ENCODE measurements at regions of chr13 and their contacts with region 1.

Region 1: DNA sequence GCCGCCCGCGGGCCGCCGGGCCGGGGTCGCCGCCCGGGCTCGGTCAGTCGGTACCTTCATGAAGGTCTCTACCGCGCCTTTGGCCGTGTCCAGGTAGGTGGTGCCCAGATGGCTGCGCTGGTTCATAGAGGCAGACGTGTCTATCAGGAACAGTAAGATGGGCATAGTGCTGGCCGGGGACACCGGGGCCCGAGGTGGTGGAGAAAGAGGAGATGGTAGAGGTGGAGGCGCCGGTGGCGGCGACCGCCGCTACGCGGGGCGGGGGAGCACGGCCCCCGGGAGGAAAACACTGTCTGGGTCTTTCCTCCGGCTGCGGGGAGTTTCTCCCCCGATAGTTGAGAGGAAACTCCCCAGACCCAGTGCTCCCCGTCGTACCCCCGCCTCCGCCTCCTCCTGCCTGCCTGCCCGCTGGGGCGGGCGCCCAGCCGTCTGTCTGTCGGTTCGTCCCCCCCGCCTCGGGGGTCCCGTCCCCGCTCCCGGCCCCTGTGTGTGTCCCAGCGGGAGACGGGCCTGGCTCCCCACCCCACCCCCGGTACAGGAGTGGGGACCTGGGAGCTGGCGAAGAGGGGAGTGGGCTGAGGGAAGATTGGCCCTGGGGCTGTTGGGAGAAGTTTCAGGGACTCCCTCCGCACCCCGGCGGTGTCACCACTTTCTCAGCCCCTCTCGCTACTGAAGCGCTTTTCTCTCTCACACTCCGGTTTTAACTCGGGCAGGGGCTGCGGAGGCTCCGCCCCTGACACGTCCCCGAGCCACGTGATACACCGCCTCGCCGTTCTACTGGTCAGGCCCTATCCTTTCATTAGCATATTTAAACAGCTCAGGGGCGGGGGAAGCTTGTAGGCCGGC is at the start of gene INTS6:
- DNase-seq: peak; percentile 100
- ATAC-seq: peak; percentile 73
- H3K4me3 ChIP-seq: peak within 1 kb of the TSS; percentile 81 to 93 (median 87)
- H3K4me3 Mint-ChIP-seq: peak within 1 kb of the TSS; percentile 95
- H3K27ac ChIP-seq: peak within 1 kb of the TSS; percentile 95 to 98
- H3K27ac Mint-ChIP-seq: peak within 1 kb of the TSS; percentile 97
- H3K4me1 ChIP-seq: peaks cover 25 to 28% of the 10 kb centered on the region in 2 donors
- H3K4me1 Mint-ChIP-seq: peaks cover 48% of the 10 kb centered on the region
- H3K27me3 ChIP-seq: no peaks in the 10 kb centered on the region
- H3K27me3 Mint-ChIP-seq: no peaks in the 10 kb centered on the region
- CTCF ChIP-seq: no peak
- total RNA-seq, gene INTS6: 74.7 TPM in 2 replicates

Region 2: DNA sequence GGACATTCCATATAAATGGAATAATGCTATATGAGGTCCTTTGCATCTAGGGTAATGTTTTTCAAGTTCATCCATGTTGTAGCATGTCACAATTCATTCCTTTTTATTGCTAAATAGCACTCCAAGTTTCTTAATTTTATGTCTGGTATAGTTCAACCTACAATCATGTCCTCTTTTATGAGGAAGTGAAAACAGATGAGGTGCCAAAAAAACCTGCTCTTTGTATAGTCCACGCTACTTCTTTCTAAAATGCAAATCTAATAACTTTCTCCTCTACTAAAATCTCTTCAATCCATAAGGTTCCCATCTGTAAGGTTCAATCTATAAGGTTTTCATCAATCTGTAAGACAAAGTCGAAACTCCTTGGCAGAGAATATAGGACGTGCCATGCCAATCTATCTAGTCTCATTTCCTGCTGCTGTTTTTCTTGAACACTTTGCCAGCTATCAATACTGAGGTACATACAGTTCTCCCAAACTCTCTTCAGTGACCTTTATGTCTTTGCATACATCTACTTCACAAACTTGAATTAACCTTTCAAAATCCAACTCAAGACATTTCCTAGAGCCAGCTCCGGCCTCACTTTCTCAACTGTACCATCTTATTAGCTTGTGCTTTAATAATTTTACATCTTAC is 33.5 kb before region 1 on chr13:
- CTCF ChIA-PET with region 1: no interaction called
- POLR2A ChIA-PET with region 1: interaction called, 6 read pairs
- intact Hi-C with region 1: loop called (anchors 2 kb)
- DNase-seq: peak; percentile 60
- ATAC-seq: peak; percentile 78
- H3K4me3 ChIP-seq: peak overlapping the region in 3 of 5 experiments; percentile 7 to 42 (median 20)
- H3K4me3 Mint-ChIP-seq: peak overlapping the region; percentile 82
- H3K27ac ChIP-seq: peak overlapping the region; percentile 2 to 53
- H3K27ac Mint-ChIP-seq: peak overlapping the region; percentile 87
- H3K4me1 ChIP-seq: peaks cover 39 to 72% of the 10 kb centered on the region in 2 donors
- H3K4me1 Mint-ChIP-seq: peaks cover 75% of the 10 kb centered on the region
- H3K27me3 ChIP-seq: no peaks in the 10 kb centered on the region
- H3K27me3 Mint-ChIP-seq: no peaks in the 10 kb centered on the region
- CTCF ChIP-seq: no peak

Region 3: DNA sequence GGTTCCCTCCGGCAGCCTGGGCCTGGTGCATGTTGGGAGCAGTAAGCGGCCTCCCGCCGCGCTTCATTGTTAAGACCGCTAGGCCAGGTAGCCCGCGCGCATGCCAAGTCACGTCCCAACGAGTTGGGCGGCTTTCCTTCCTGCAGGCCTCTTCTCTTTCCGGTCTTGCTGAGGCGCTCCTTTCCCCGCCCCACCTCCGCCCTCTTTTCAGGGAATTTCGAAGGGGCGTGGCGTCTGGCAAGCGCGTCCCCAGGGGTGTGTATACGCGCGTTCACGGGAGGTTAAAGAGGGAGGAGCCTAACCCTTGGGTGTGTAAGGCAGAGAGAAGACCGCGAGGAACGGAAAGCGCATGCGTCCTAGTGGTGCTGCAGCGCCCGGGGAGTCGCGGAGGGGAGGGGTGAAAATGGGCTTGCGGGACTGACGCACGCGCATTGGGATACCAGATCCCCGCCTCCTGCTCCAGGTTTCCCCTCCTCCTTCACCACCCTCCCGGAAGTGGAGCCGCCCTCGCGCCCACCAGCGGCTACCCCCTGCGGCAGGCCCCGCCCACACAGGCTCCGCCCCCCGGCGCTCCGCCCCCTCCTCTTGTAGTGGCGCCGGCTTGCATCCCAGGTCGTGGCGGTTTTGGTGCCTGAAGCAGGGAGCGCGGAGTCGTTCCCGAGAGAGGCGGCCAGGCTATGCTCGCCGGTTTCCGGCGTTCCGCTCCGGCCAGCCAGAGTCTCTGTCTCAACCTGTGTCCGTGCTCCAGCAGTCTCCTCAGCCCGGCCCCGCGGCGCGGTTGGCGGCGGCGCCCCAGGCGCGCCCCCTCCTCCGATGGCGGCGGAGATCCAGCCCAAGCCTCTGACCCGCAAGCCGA is 131.5 kb after region 1 on chr13 and contains the start of gene WDFY2:
- CTCF ChIA-PET with region 1: interaction called, 6 read pairs
- POLR2A ChIA-PET with region 1: interaction called, 33 read pairs
- intact Hi-C with region 1: loop called (anchors 1 kb)
- DNase-seq: peak; percentile 100
- ATAC-seq: peak; percentile 80
- H3K4me3 ChIP-seq: peak within 1 kb of the TSS; percentile 68 to 94 (median 91)
- H3K4me3 Mint-ChIP-seq: peak within 1 kb of the TSS; percentile 97
- H3K27ac ChIP-seq: peak within 1 kb of the TSS; percentile 81 to 88
- H3K27ac Mint-ChIP-seq: peak within 1 kb of the TSS; percentile 98
- H3K4me1 ChIP-seq: peaks cover 12 to 14% of the 10 kb centered on the region in 2 donors
- H3K4me1 Mint-ChIP-seq: peaks cover 35% of the 10 kb centered on the region
- H3K27me3 ChIP-seq: no peaks in the 10 kb centered on the region
- H3K27me3 Mint-ChIP-seq: no peaks in the 10 kb centered on the region
- CTCF ChIP-seq: no peak
- total RNA-seq, gene WDFY2: 46.1 and 47.7 TPM in 2 replicates

Region 4: DNA sequence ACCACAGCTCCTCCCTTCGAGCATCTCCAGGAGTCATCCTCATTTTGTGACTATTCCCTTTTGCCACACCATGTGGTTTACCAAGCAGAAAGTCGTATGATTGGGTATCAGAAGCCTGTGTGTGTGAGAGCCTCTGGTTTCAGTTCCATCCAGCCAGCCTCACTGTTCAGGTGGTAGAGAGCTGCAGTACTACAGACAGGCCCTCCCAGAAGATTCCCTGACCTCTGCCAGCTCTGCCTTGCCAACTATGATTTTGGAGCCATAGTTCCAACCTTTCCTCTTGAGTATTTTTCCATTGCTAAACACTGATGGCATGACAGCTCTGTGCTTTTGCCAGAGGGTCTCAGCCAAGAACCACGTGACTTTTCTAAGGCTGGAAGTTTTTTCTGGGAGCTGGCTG is 268.9 kb after region 1 on chr13:
- CTCF ChIA-PET with region 1: no interaction called
- POLR2A ChIA-PET with region 1: interaction called, 13 read pairs
- intact Hi-C with region 1: no loop called
- DNase-seq: no peak
- ATAC-seq: no peak
- H3K4me3 ChIP-seq: no peak overlapping the region
- H3K4me3 Mint-ChIP-seq: no peak overlapping the region
- H3K27ac ChIP-seq: peak overlapping the region in 1 of 2 donors; percentile 21
- H3K27ac Mint-ChIP-seq: no peak overlapping the region
- H3K4me1 ChIP-seq: peaks cover 0 to 3% of the 10 kb centered on the region in 2 donors
- H3K4me1 Mint-ChIP-seq: peaks cover 11% of the 10 kb centered on the region
- H3K27me3 ChIP-seq: no peaks in the 10 kb centered on the region
- H3K27me3 Mint-ChIP-seq: no peaks in the 10 kb centered on the region
- CTCF ChIP-seq: no peak

Region 5: GRCh38 chr13:51803422-51804294 is 351.1 kb after region 1 on chr13 and contains the start of gene DHRS12:
- CTCF ChIA-PET with region 1: interaction called, 6 read pairs
- POLR2A ChIA-PET with region 1: interaction called, 12 read pairs
- intact Hi-C with region 1: loop called (anchors 1 kb)
- DNase-seq: peak; percentile 95
- ATAC-seq: peak; percentile 84
- H3K4me3 ChIP-seq: peak within 1 kb of the TSS; percentile 64 to 94 (median 72)
- H3K4me3 Mint-ChIP-seq: peak within 1 kb of the TSS; percentile 99
- H3K27ac ChIP-seq: peak within 1 kb of the TSS; percentile 98
- H3K27ac Mint-ChIP-seq: peak within 1 kb of the TSS; percentile 100
- H3K4me1 ChIP-seq: peaks cover 19 to 27% of the 10 kb centered on the region in 2 donors
- H3K4me1 Mint-ChIP-seq: peaks cover 38% of the 10 kb centered on the region
- H3K27me3 ChIP-seq: no peaks in the 10 kb centered on the region
- H3K27me3 Mint-ChIP-seq: no peaks in the 10 kb centered on the region
- CTCF ChIP-seq: no peak
- total RNA-seq, gene DHRS12: 23.2 TPM in 2 replicates

Region 6: DNA sequence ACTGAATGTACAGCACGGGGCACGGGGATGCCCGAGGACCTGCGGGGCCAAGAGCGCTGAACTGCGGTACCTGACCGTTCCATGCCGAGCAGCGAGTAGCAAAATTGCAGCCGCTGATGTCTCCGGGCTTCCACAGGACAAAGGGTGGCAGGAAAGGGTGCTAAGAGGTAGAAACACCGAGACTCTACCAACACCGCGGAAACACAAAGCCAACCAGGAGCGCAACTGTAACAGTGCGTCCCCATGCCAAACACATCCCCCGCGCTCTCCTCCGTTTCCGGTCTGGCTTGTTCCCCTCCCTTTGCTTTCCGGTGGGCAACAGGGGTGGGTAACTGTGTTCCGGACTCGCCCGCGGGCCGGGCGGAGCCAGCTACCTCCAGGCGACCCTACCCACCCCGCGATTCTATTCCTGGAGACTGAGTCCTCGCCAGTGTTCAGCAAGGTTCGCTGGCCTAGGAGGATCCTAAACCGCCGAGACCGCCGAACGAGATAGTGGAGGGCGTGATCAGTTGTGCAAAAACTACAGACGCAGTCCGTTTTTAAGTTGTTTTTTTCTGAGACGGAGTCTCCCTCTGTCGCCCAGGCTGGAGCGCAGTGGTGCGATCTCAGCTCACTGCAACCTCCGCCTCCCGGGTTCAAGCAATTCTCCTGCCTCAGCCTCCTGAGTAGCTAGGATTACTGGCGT is 741.7 kb after region 1 on chr13:
- CTCF ChIA-PET with region 1: no interaction called
- POLR2A ChIA-PET with region 1: interaction called, 5 read pairs
- intact Hi-C with region 1: loop called (anchors 2 kb)
- DNase-seq: peak; percentile 91
- ATAC-seq: peak; percentile 84
- H3K4me3 ChIP-seq: peak overlapping the region; percentile 69 to 97 (median 95)
- H3K4me3 Mint-ChIP-seq: peak overlapping the region; percentile 99
- H3K27ac ChIP-seq: peak overlapping the region; percentile 57 to 75
- H3K27ac Mint-ChIP-seq: peak overlapping the region; percentile 98
- H3K4me1 ChIP-seq: peaks cover 8 to 16% of the 10 kb centered on the region in 2 donors
- H3K4me1 Mint-ChIP-seq: peaks cover 21% of the 10 kb centered on the region
- H3K27me3 ChIP-seq: no peaks in the 10 kb centered on the region
- H3K27me3 Mint-ChIP-seq: no peaks in the 10 kb centered on the region
- CTCF ChIP-seq: no peak